CD8-positive, alpha-beta T cell (primary cell): ENCODE measurements at regions of chr17 and their contacts with region 1.

Region 1: DNA sequence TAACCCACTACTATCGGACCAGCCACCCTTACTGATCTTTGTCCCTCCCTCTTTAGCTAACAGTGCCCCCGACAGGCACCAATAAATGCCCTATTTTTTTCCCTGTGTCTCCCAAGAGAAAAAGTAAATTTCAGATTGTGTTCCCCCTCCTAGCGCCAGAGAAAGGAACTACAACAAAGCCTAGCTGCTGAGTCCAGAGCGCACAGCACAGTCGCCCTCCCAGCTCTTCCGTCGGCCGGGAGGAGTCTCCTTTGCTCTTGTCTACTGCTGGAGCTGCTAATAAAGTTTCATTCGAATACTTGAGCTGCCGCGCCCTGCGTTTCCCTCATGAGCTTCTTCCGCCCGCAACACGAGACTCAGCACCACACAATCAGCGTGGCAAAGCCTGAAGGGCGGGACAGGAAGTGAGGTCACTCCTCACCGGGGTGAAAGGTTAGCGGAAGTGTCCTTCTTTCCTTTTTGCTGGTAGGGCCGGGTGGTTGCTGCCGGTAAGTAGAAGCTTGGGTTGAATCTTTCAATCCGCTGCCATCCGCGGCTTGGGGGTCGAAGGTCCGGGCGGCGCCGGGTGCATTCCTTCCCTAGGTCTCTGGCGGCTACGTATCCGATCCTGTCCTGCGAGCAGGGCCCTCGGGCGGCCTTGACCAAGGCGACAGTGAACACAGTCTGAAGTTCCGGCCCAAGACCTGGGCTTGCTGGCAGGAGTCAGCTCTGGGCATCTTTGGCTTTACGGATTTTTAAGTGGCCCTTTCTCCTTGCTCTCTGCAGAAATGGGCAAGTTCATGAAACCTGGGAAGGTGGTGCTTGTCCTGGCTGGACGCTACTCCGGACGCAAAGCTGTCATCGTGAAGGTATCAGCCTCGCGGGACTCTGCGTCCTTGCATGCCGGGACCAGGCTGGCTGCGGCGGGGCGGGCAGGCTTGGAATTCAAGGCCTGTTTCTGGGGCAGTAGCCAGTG is at the start of gene RPL27:
- DNase-seq: peak; percentile 95 to 100 (median 98)
- ATAC-seq: peak; percentile 93
- H3K4me3 ChIP-seq: peak within 1 kb of the TSS; percentile 61 to 89
- H3K4me3 Mint-ChIP-seq: peak within 1 kb of the TSS; percentile 94
- H3K27ac ChIP-seq: peak within 1 kb of the TSS; percentile 90 to 95
- H3K27ac Mint-ChIP-seq: peak within 1 kb of the TSS; percentile 99
- H3K4me1 ChIP-seq: peaks cover 16% of the 10 kb centered on the region
- H3K4me1 Mint-ChIP-seq: peaks cover 25% of the 10 kb centered on the region
- H3K27me3 ChIP-seq: no peaks in the 10 kb centered on the region
- H3K27me3 Mint-ChIP-seq: no peaks in the 10 kb centered on the region
- CTCF ChIP-seq: peak; percentile 90
- total RNA-seq, gene RPL27: 1,796 to 1,873 TPM

Region 2: DNA sequence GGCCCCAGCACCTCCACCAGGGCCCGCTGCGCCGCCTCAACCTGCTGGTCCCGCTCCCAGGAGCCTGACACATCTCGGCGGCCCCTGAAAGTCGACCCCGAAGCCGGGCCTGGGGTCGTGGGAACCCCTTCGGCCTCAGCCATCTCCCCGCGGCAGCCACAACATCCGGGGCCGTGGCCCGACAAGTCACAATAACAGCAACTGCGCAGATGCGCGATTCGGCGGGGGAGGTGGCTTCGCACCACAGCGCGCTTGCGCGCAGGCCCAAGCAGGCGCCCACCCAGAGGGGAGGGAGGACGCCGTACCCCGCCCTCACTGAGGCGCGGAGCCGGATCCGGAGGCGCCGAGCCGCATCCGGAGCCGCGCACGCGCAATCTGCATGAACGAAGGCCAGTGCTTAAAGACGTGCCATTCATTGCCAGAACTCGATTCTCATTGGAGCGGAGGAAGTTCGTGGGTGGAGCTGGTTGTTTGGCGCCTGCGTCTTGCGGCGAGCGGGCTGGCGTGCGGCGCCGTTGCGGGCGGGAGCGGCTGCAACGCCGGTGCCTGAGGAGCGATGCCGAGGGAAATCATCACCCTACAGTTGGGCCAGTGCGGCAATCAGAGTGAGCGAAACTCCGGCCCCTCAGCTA is 389.0 kb before region 1 on chr17 and contains the starts of genes RETREG3 and TUBG1:
- CTCF ChIA-PET with region 1: no interaction called
- POLR2A ChIA-PET with region 1: interaction called, 4 read pairs
- intact Hi-C with region 1: loop called in 1 of 2 experiments (anchors 1 kb)
- DNase-seq: peak; percentile 98 to 100 (median 99)
- ATAC-seq: peak; percentile 92
- H3K4me3 ChIP-seq: peak within 1 kb of the TSS; percentile 90 to 94
- H3K4me3 Mint-ChIP-seq: peak within 1 kb of the TSS; percentile 100
- H3K27ac ChIP-seq: peak within 1 kb of the TSS; percentile 90 to 91
- H3K27ac Mint-ChIP-seq: peak within 1 kb of the TSS; percentile 99
- H3K4me1 ChIP-seq: peaks cover 39% of the 10 kb centered on the region
- H3K4me1 Mint-ChIP-seq: peaks cover 48% of the 10 kb centered on the region
- H3K27me3 ChIP-seq: no peaks in the 10 kb centered on the region
- H3K27me3 Mint-ChIP-seq: no peaks in the 10 kb centered on the region
- CTCF ChIP-seq: no peak
- total RNA-seq, gene RETREG3: 59.0 to 59.3 TPM
- total RNA-seq, gene TUBG1: 4.9 to 8.4 TPM

Region 3: GRCh38 chr17:42779936-42780850 is 218.1 kb before region 1 on chr17 and contains the start of gene WNK4:
- CTCF ChIA-PET with region 1: no interaction called
- POLR2A ChIA-PET with region 1: no interaction called
- intact Hi-C with region 1: no loop called
- DNase-seq: no peak
- ATAC-seq: peak; percentile 35
- H3K4me3 ChIP-seq: no peak within 1 kb of the TSS
- H3K4me3 Mint-ChIP-seq: peak within 1 kb of the TSS; percentile 5
- H3K27ac ChIP-seq: no peak within 1 kb of the TSS
- H3K27ac Mint-ChIP-seq: no peak within 1 kb of the TSS
- H3K4me1 ChIP-seq: peaks cover 22% of the 10 kb centered on the region
- H3K4me1 Mint-ChIP-seq: peaks cover 21% of the 10 kb centered on the region
- H3K27me3 ChIP-seq: peaks cover 29 to 42% of the 10 kb centered on the region in 2 experiments
- H3K27me3 Mint-ChIP-seq: peaks cover 36% of the 10 kb centered on the region
- CTCF ChIP-seq: no peak
- total RNA-seq, gene WNK4: 0.16 to 0.28 TPM

Region 4: GRCh38 chr17:42964161-42964932 is 33.9 kb before region 1 on chr17 and contains the start of gene AARSD1:
- CTCF ChIA-PET with region 1: no interaction called
- POLR2A ChIA-PET with region 1: interaction called, 3 read pairs
- intact Hi-C with region 1: loop called (anchors 1 kb)
- DNase-seq: peak; percentile 80 to 96 (median 88)
- ATAC-seq: peak; percentile 99
- H3K4me3 ChIP-seq: peak within 1 kb of the TSS; percentile 48 to 86
- H3K4me3 Mint-ChIP-seq: peak within 1 kb of the TSS; percentile 87
- H3K27ac ChIP-seq: peak within 1 kb of the TSS; percentile 63 to 82
- H3K27ac Mint-ChIP-seq: peak within 1 kb of the TSS; percentile 84
- H3K4me1 ChIP-seq: peaks cover 7% of the 10 kb centered on the region
- H3K4me1 Mint-ChIP-seq: peaks cover 19% of the 10 kb centered on the region
- H3K27me3 ChIP-seq: no peaks in the 10 kb centered on the region
- H3K27me3 Mint-ChIP-seq: no peaks in the 10 kb centered on the region
- CTCF ChIP-seq: no peak
- total RNA-seq, gene AARSD1: 75.1 to 87.6 TPM

Region 5: GRCh38 chr17:43104665-43105064 is 106.4 kb after region 1 on chr17:
- CTCF ChIA-PET with region 1: no interaction called
- POLR2A ChIA-PET with region 1: no interaction called
- intact Hi-C with region 1: no loop called
- DNase-seq: no peak
- ATAC-seq: no peak
- H3K4me3 ChIP-seq: no peak overlapping the region
- H3K4me3 Mint-ChIP-seq: no peak overlapping the region
- H3K27ac ChIP-seq: no peak overlapping the region
- H3K27ac Mint-ChIP-seq: no peak overlapping the region
- H3K4me1 ChIP-seq: no peaks in the 10 kb centered on the region
- H3K4me1 Mint-ChIP-seq: no peaks in the 10 kb centered on the region
- H3K27me3 ChIP-seq: no peaks in the 10 kb centered on the region
- H3K27me3 Mint-ChIP-seq: no peaks in the 10 kb centered on the region
- CTCF ChIP-seq: no peak

Region 6: DNA sequence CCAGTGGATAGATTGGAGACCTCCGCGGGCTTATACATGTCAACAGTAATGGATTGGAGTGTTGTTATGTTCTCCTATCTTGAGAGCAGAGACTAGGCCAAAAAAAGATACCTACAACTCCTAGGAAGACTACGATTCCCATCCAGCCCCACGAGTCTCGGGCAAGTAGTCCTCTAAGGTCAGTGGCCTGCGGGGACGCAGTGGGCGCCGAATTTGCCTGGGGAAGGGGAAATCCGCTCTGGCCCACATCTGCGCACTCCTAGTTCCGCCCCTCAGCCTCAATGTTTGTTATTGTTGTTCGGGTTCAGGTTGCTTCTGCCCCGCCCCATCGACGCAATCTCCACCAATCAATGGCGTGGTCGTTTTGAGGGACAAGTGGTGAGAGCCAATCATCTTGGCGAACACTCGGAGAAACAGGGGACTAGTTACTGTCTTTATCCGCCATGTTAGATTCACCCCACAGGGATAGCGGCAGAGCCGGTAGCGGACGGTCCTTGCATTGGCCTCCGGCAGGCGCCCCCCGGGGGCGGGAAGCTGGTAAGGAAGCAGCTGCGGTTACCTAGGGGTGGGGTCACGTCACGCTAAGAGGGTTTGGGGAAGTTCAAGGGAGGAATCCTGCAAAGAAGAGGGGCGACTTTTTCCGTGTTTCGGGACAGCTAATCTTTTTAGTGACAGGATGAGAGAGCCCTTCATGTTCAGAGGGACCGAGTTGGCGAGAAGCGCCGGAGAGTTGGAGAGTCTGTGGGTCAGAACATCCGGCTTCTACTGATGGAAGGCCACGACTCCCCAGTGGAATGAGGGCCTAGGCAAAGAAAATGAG is 172.7 kb after region 1 on chr17 and contains the start of gene NBR1:
- CTCF ChIA-PET with region 1: interaction called, 7 read pairs
- POLR2A ChIA-PET with region 1: interaction called, 13 read pairs
- intact Hi-C with region 1: loop called (anchors 1 kb)
- DNase-seq: peak; percentile 88 to 99 (median 95)
- ATAC-seq: peak; percentile 79
- H3K4me3 ChIP-seq: peak within 1 kb of the TSS; percentile 84 to 85
- H3K4me3 Mint-ChIP-seq: no peak within 1 kb of the TSS
- H3K27ac ChIP-seq: peak within 1 kb of the TSS; percentile 97 to 98
- H3K27ac Mint-ChIP-seq: no peak within 1 kb of the TSS
- H3K4me1 ChIP-seq: peaks cover 35% of the 10 kb centered on the region
- H3K4me1 Mint-ChIP-seq: peaks cover 33% of the 10 kb centered on the region
- H3K27me3 ChIP-seq: no peaks in the 10 kb centered on the region
- H3K27me3 Mint-ChIP-seq: no peaks in the 10 kb centered on the region
- CTCF ChIP-seq: no peak
- total RNA-seq, gene NBR1: 19.1 to 19.4 TPM

Region 7: GRCh38 chr17:43360739-43361505 is 362.7 kb after region 1 on chr17:
- CTCF ChIA-PET with region 1: no interaction called
- POLR2A ChIA-PET with region 1: interaction called, 39 read pairs
- intact Hi-C with region 1: no loop called
- DNase-seq: peak; percentile 80 to 98 (median 94)
- ATAC-seq: peak; percentile 76
- H3K4me3 ChIP-seq: peak overlapping the region; percentile 60 to 64
- H3K4me3 Mint-ChIP-seq: peak overlapping the region; percentile 86
- H3K27ac ChIP-seq: peak overlapping the region; percentile 92 to 100
- H3K27ac Mint-ChIP-seq: peak overlapping the region; percentile 100
- H3K4me1 ChIP-seq: peaks cover 13% of the 10 kb centered on the region
- H3K4me1 Mint-ChIP-seq: peaks cover 35% of the 10 kb centered on the region
- H3K27me3 ChIP-seq: no peaks in the 10 kb centered on the region
- H3K27me3 Mint-ChIP-seq: no peaks in the 10 kb centered on the region
- CTCF ChIP-seq: no peak

Region 8: DNA sequence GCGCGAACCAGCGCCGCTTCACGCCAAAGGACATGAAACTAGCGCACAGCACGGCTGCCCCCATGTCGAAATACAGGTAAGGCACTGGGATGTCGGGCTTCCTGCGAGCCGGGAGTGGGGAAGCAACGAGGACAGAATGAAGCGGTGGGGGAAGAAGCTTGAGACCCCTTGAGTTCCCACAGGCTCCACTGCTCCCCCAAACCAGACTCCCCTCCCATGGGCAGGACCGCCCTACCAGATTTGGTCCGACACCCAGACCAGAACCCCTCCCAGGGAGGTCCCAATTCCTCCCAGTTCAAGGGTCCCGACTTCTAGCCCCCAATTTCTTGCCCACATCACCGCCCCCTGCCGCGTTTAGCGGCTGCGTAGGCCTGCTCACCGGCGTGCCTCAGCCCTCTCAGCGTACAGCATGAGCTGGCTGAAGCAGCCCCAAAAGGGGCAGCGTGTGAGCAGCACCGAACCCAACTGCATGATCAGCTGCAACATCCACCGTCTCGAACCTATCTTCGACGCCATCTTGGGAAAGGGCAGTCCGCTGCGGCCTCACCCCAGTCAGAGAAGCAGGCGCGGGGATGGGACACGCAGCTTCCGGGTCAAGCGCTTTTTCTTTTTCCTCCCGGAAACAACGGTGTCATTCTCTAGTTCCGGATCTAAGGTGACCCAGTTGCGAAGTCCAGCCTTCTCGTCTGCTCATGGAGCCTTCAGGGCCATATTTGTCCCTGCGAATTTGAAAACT is 1016.3 kb after region 1 on chr17 and contains the start of gene TMEM101:
- CTCF ChIA-PET with region 1: no interaction called
- POLR2A ChIA-PET with region 1: no interaction called
- intact Hi-C with region 1: loop called in 1 of 2 experiments (anchors 10 kb)
- DNase-seq: peak; percentile 79 to 95 (median 90)
- ATAC-seq: peak; percentile 99
- H3K4me3 ChIP-seq: peak within 1 kb of the TSS; percentile 81 to 91
- H3K4me3 Mint-ChIP-seq: peak within 1 kb of the TSS; percentile 100
- H3K27ac ChIP-seq: peak within 1 kb of the TSS; percentile 51 to 55
- H3K27ac Mint-ChIP-seq: peak within 1 kb of the TSS; percentile 95
- H3K4me1 ChIP-seq: peaks cover 11% of the 10 kb centered on the region
- H3K4me1 Mint-ChIP-seq: peaks cover 10% of the 10 kb centered on the region
- H3K27me3 ChIP-seq: no peaks in the 10 kb centered on the region
- H3K27me3 Mint-ChIP-seq: no peaks in the 10 kb centered on the region
- CTCF ChIP-seq: no peak
- total RNA-seq, gene TMEM101: 8.1 to 8.7 TPM